ENCODE measurements at regions of chr10 and their contacts with region 1.

Region 1: GRCh38 chr10:91758303-91759146 is 39.7 kb upstream of the TNKS2 start:
- DNase-seq: peak in 2 of 4 experiments; percentile 11 to 38
- ATAC-seq: peak; percentile 70
- H3K4me3 ChIP-seq: no peak overlapping the region
- H3K27ac ChIP-seq: no peak overlapping the region
- H3K4me1 ChIP-seq: no peaks in the 10 kb centered on the region; a peak in 1 of 5 replicates
- H3K27me3 ChIP-seq: no peaks in the 10 kb centered on the region
- CTCF ChIP-seq: peak; percentile 33 to 70 (median 41); a peak in 4 of 6 replicates
- EP300 ChIP-seq: no peak
- POLR2A ChIP-seq: no peak
- RAD21 ChIP-seq: peak; percentile 78 to 86

Region 2: GRCh38 chr10:91856637-91857036 is 98.1 kb after region 1 on chr10:
- CTCF ChIA-PET with region 1: no interaction called
- POLR2A ChIA-PET with region 1: no interaction called
- in situ Hi-C with region 1: no loop called
- intact Hi-C with region 1: loop called (anchors 10 kb)
- DNase-seq: peak in 1 of 4 experiments; percentile 6
- ATAC-seq: no peak
- H3K4me3 ChIP-seq: no peak overlapping the region
- H3K27ac ChIP-seq: no peak overlapping the region
- H3K4me1 ChIP-seq: no peaks in the 10 kb centered on the region
- H3K27me3 ChIP-seq: no peaks in the 10 kb centered on the region
- CTCF ChIP-seq: peak; percentile 10 to 32 (median 29); a peak in 3 of 6 replicates
- EP300 ChIP-seq: no peak
- POLR2A ChIP-seq: no peak
- RAD21 ChIP-seq: peak in 1 of 2 experiments; percentile 9; a peak in 1 of 4 replicates

Region 3: DNA sequence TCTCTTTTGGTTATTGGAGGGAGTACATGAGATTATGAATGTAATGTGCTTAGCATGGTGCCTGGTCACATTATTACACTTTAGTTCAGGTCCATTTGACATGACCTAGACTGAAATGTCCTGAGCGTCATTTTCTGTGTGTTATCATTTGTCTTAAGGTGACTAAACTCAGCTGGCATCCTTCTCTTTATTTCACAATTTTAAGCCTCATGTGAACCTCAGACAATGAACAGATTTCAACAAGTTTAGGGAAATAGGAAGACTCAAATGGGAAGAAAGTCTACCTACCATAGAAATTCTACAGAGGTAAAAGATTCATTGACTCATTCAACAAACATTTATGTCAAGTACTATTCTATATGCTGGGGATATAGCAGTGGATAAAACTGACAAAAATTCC is 1019.6 kb after region 1 on chr10:
- CTCF ChIA-PET with region 1: no interaction called
- POLR2A ChIA-PET with region 1: no interaction called
- in situ Hi-C with region 1: no loop called
- intact Hi-C with region 1: no loop called
- DNase-seq: no peak
- ATAC-seq: no peak
- H3K4me3 ChIP-seq: no peak overlapping the region
- H3K27ac ChIP-seq: no peak overlapping the region
- H3K4me1 ChIP-seq: no peaks in the 10 kb centered on the region; a peak in 1 of 5 replicates
- H3K27me3 ChIP-seq: no peaks in the 10 kb centered on the region
- CTCF ChIP-seq: no peak
- EP300 ChIP-seq: no peak
- POLR2A ChIP-seq: no peak
- RAD21 ChIP-seq: no peak